ENCODE measurements at regions of chr15 and their contacts with region 1.

Region 1: DNA sequence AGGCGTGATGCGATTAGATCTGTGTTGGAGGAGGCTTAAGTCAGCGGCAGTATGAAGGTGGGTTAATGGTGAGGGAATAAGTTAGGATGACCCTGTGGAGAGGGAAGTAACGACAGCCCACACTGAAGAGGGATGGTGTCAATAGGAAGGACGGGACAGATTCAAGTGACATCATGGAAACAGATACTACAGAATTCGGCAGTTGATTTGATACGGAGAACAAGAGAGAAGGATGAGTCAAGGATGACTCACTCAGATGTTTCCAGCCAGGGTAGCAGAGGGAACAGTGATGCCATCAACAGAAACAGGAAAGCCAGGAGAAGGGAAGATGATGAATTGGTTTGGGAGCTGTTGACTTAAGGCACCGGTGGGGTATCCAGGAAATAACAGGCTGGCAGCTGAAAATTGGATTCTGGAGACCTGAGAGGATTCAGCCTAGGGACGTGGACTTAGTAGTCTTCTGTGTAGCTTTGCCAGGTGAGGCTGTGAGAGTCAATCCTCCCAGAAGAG is 38.0 kb downstream of the SHC4 start:
- DNase-seq: no peak
- H3K4me3 Mint-ChIP-seq: peak overlapping the region; percentile 30
- H3K27ac Mint-ChIP-seq: peak overlapping the region; percentile 97
- H3K4me1 Mint-ChIP-seq: peaks cover 74% of the 10 kb centered on the region
- H3K27me3 Mint-ChIP-seq: no peaks in the 10 kb centered on the region

Region 2: GRCh38 chr15:48888836-48889235 is 36.9 kb before region 1 on chr15:
- intact Hi-C with region 1: loop called (anchors 1 kb)
- DNase-seq: no peak
- H3K4me3 Mint-ChIP-seq: no peak overlapping the region
- H3K27ac Mint-ChIP-seq: peak overlapping the region; percentile 30
- H3K4me1 Mint-ChIP-seq: peaks cover 40% of the 10 kb centered on the region
- H3K27me3 Mint-ChIP-seq: no peaks in the 10 kb centered on the region

Region 3: DNA sequence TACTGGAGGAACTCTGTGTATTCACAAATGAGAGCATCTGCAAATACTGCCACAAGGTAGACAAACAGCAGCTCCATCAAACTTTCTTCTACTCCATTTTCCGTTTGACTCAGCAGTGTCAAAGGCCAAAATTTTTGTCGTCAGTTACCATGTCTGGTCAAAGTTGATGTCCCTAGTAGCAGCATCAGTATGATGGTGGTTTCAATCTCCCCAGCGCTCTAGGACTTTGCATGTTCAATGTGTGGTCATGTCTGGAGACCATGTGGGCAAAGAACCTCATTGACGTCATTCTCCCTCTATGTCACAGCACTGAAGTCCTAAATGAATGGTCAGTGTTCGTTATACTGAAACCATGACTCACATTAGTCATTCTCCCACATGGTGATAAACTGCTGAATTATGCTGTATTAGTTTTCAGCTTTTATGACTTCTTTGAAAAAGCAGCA is 14.7 kb after region 1 on chr15:
- intact Hi-C with region 1: loop called (anchors 1 kb)
- DNase-seq: no peak
- H3K4me3 Mint-ChIP-seq: no peak overlapping the region
- H3K27ac Mint-ChIP-seq: peak overlapping the region; percentile 85
- H3K4me1 Mint-ChIP-seq: peaks cover 49% of the 10 kb centered on the region
- H3K27me3 Mint-ChIP-seq: no peaks in the 10 kb centered on the region

Region 4: GRCh38 chr15:48946088-48946839 is 20.5 kb after region 1 on chr15:
- intact Hi-C with region 1: loop called (anchors 1 kb)
- DNase-seq: no peak
- H3K4me3 Mint-ChIP-seq: no peak overlapping the region
- H3K27ac Mint-ChIP-seq: peak overlapping the region; percentile 86
- H3K4me1 Mint-ChIP-seq: peaks cover 34% of the 10 kb centered on the region
- H3K27me3 Mint-ChIP-seq: no peaks in the 10 kb centered on the region

Region 5: DNA sequence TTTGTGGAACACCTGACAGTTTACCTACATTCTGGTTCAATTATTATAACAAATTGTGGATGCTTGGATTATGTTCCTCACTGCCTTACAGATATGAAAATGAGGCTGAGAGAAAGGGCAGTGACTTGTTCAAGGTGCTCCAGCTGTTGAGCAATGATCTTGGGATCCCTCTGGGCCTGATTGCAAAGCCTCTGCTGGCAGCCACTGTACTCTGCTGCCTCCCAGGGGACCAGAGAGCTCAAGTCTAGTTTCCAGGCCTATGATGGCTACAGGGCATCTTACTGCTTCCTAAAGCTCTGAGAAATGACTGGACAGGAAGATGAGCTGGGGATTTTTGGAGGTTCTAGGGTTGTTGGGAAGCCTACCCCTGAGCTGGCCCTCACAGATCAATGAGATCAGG is 40.2 kb after region 1 on chr15:
- intact Hi-C with region 1: loop called (anchors 1 kb)
- DNase-seq: no peak
- H3K4me3 Mint-ChIP-seq: peak overlapping the region; percentile 16
- H3K27ac Mint-ChIP-seq: peak overlapping the region; percentile 97
- H3K4me1 Mint-ChIP-seq: peaks cover 72% of the 10 kb centered on the region
- H3K27me3 Mint-ChIP-seq: no peaks in the 10 kb centered on the region

Region 6: GRCh38 chr15:49122541-49123062 is 196.8 kb after region 1 on chr15:
- intact Hi-C with region 1: no loop called
- DNase-seq: no peak
- H3K4me3 Mint-ChIP-seq: no peak overlapping the region
- H3K27ac Mint-ChIP-seq: no peak overlapping the region
- H3K4me1 Mint-ChIP-seq: no peaks in the 10 kb centered on the region
- H3K27me3 Mint-ChIP-seq: no peaks in the 10 kb centered on the region